Transverse colon (tissue), 4 donors: ENCODE measurements at regions of chr19 and their contacts with region 1.

Region 1: DNA sequence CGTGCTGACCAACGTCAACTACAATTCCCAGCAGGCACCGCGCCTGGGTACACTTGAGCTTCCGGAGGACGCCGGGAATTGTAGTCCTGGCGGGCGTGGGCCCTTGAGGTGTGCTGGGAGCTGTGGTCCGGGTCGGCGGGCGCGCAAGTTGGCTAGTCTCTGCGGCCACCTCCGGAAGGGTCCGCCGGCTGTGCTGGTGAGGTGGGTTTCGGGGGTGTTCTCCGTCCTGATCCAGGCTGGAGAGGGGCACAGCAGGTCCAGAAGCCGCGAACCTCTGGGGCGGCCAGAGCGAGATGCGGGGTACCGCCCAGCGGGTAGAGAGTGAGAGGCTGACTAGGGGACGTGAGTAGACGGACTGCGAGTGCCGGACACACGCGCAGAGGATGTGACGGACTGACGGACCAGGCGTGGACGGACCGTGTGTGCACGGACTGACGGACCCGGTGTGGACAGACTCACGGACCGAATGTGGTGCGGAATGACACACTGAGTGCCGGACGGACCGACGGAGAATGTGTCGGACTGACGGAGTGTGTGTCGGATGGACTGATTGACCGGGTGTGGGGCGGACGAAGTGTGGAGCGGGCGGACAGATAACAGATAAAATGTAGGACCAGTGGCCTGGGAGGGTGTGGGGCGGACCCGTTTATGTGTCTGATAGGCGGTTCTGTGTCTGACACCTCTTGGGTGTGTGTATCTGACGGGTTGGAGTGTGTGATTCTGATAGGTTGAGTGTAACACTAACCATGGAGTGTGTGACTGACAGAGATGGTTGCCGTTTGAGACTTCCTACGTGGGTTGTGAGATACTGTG is at the start of gene ZSCAN22:
- DNase-seq: peak; percentile 97
- H3K4me3 ChIP-seq: peak within 1 kb of the TSS; percentile 55 to 73 (median 62)
- H3K27ac ChIP-seq: peak within 1 kb of the TSS; percentile 80 to 94 (median 88)
- H3K4me1 ChIP-seq: peaks cover 16 to 27% (median 22%) of the 10 kb centered on the region in 4 donors
- H3K27me3 ChIP-seq: no peaks in the 10 kb centered on the region
- CTCF ChIP-seq: no peak
- EP300 ChIP-seq: no peak
- POLR2A ChIP-seq: peak; percentile 78
- total RNA-seq, gene ZSCAN22: 3.0 to 11.6 (median 3.3) TPM

Region 2: GRCh38 chr19:58362272-58362994 is 35.3 kb after region 1 on chr19 and contains the start of gene ZNF497:
- in situ Hi-C with region 1: no loop called
- intact Hi-C with region 1: loop called (anchors 1 kb)
- DNase-seq: peak; percentile 98
- H3K4me3 ChIP-seq: peak within 1 kb of the TSS; percentile 63 to 86 (median 68)
- H3K27ac ChIP-seq: peak within 1 kb of the TSS; percentile 91 to 96 (median 96)
- H3K4me1 ChIP-seq: peaks cover 0 to 8% (median 6%) of the 10 kb centered on the region in 4 donors
- H3K27me3 ChIP-seq: no peaks in the 10 kb centered on the region
- CTCF ChIP-seq: no peak
- EP300 ChIP-seq: no peak
- POLR2A ChIP-seq: peak; percentile 77
- total RNA-seq, gene ZNF497: 1.3 to 19.3 (median 4.2) TPM

Region 3: GRCh38 chr19:58380722-58381466 is 53.8 kb after region 1 on chr19 and contains the start of gene ZNF837:
- in situ Hi-C with region 1: no loop called
- intact Hi-C with region 1: no loop called
- DNase-seq: peak; percentile 99
- H3K4me3 ChIP-seq: peak within 1 kb of the TSS; percentile 43 to 89 (median 74)
- H3K27ac ChIP-seq: peak within 1 kb of the TSS; percentile 94 to 96 (median 94)
- H3K4me1 ChIP-seq: peaks cover 15 to 29% (median 25%) of the 10 kb centered on the region in 4 donors
- H3K27me3 ChIP-seq: no peaks in the 10 kb centered on the region
- CTCF ChIP-seq: peak in 1 of 5 experiments; percentile 35
- EP300 ChIP-seq: no peak
- POLR2A ChIP-seq: peak; percentile 95
- total RNA-seq, gene ZNF837: 3.7 to 10.7 (median 6.1) TPM